ENCODE measurements at regions of chr10 and their contacts with region 1.

Region 1: DNA sequence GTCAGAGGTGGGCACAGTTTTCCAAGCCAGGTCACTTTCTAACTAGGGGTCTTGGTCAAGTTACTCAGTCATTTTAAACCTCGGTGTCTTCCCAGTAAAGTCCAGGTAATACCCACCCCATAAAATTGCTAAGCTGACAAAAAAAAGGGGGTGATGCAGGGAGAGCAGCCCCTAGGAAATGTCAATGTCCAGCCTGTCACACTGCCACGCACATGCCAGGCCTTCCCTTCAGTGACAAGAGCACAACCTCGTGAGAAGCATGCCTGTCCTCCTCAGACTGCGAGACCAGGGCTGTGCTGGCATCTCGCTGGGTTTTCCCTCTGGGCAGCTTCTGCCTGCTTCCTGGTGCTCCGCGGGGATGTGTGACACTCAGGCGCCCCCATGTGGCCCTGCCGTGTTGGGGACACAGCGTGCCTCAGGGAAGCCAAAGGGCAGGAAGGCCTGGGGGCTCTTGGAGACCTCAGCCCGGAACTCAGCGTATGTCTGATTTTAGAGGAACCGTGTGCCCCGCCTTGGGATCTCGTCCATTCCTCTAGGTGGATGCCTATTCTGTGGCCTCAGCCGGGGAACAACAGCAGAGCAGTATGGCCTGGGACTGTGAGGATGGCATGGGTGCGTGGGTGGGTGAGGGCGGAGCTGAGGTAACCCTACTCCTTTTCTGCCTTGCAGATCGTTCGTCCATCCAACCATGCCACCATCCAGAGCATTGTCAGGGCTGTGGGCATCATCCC is 10.2 kb upstream of the GDF2 start:
- DNase-seq: peak; percentile 84
- H3K4me3 ChIP-seq: no peak overlapping the region
- H3K27ac ChIP-seq: no peak overlapping the region
- H3K4me1 ChIP-seq: peaks cover 10% of the 10 kb centered on the region
- H3K27me3 ChIP-seq: peaks cover 46% of the 10 kb centered on the region
- CTCF ChIP-seq: peak; percentile 85

Region 2: GRCh38 chr10:47024399-47025252 is 287.5 kb before region 1 on chr10:
- intact Hi-C with region 1: loop called (anchors 10 kb)
- DNase-seq: peak; percentile 48
- H3K4me3 ChIP-seq: no peak overlapping the region
- H3K27ac ChIP-seq: no peak overlapping the region
- H3K4me1 ChIP-seq: no peaks in the 10 kb centered on the region
- H3K27me3 ChIP-seq: peaks cover 4% of the 10 kb centered on the region
- CTCF ChIP-seq: peak; percentile 79